T-cell (primary cell): ENCODE measurements at regions of chr12 and their contacts with region 1.

Region 1: GRCh38 chr12:62435303-62436163 is 31.1 kb upstream of the MON2 start:
- DNase-seq: peak in 33 of 35 experiments; percentile 4 to 50 (median 16)
- ATAC-seq: peak; percentile 72 to 81 (median 80)
- H3K4me3 ChIP-seq: peak overlapping the region; percentile 39 to 63
- H3K4me3 Mint-ChIP-seq: peak overlapping the region; percentile 74 to 91 (median 76)
- H3K27ac ChIP-seq: no peak overlapping the region
- H3K27ac Mint-ChIP-seq: no peak overlapping the region
- H3K4me1 ChIP-seq: peaks cover 3 to 19% of the 10 kb centered on the region in 2 experiments
- H3K4me1 Mint-ChIP-seq: peaks cover 20 to 23% (median 20%) of the 10 kb centered on the region in 3 donors
- H3K27me3 ChIP-seq: peaks cover 0 to 28% of the 10 kb centered on the region in 2 experiments
- H3K27me3 Mint-ChIP-seq: peaks cover 8 to 31% of the 10 kb centered on the region in 2 donors

Region 2: DNA sequence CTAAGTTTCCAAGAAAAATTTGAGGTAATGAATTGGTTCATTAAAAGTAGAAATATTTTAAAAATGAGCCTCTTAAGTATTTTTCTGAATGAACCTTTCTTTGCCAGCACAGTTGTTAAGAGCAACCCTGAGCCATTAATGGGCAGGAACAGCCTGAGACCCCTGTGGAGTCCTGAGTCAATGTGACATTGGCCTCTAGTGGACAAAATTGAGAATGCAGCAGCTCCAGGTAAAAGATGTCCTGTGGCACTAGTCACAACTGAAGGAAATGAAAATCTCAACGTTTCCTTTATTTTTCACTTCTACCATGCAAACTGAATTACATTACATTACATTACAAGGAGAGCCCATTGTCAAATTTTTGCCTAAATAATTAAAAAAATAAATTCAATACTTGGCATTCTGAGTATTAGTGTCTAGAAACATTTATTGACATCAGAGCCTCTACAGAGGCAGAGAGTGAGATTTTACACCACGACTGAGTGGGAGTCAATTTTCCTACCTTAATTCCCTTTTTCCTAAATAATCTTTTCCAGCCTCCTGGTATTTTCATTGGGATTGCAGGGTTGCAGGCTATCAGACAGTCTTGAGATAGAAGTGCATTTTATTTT is 363.7 kb after region 1 on chr12:
- CTCF ChIA-PET with region 1: interaction called, 7 to 62 read pairs
- POLR2A ChIA-PET with region 1: no interaction called
- DNase-seq: peak in 27 of 35 experiments; percentile 7 to 75 (median 36)
- ATAC-seq: peak; percentile 58 to 77 (median 72)
- H3K4me3 ChIP-seq: no peak overlapping the region
- H3K4me3 Mint-ChIP-seq: no peak overlapping the region
- H3K27ac ChIP-seq: no peak overlapping the region
- H3K27ac Mint-ChIP-seq: no peak overlapping the region
- H3K4me1 ChIP-seq: no peaks in the 10 kb centered on the region
- H3K4me1 Mint-ChIP-seq: no peaks in the 10 kb centered on the region
- H3K27me3 ChIP-seq: peaks cover 0 to 7% of the 10 kb centered on the region in 2 experiments
- H3K27me3 Mint-ChIP-seq: peaks cover 7 to 10% of the 10 kb centered on the region in 2 donors